ENCODE measurements at regions of chr10 and their contacts with region 1.

Region 1: GRCh38 chr10:24952707-24953645 is 570 bp upstream of the PRTFDC1 start:
- DNase-seq: peak; percentile 31
- H3K4me3 ChIP-seq: peak overlapping the region; percentile 38 to 47 (median 44)
- H3K27ac ChIP-seq: peak overlapping the region; percentile 64
- H3K4me1 ChIP-seq: peaks cover 9% of the 10 kb centered on the region
- H3K27me3 ChIP-seq: no peaks in the 10 kb centered on the region
- CTCF ChIP-seq: peak in 1 of 2 donors; percentile 21
- POLR2A ChIP-seq: peak; percentile 18

Region 2: GRCh38 chr10:24858288-24859270 is 94.4 kb before region 1 on chr10:
- CTCF ChIA-PET with region 1: no interaction called
- POLR2A ChIA-PET with region 1: no interaction called
- dilution Hi-C with region 1: no loop called
- intact Hi-C with region 1: loop called (anchors 1 kb)
- DNase-seq: peak; percentile 69
- H3K4me3 ChIP-seq: no peak overlapping the region
- H3K27ac ChIP-seq: peak overlapping the region; percentile 83
- H3K4me1 ChIP-seq: peaks cover 18% of the 10 kb centered on the region
- H3K27me3 ChIP-seq: no peaks in the 10 kb centered on the region
- CTCF ChIP-seq: no peak
- POLR2A ChIP-seq: no peak

Region 3: DNA sequence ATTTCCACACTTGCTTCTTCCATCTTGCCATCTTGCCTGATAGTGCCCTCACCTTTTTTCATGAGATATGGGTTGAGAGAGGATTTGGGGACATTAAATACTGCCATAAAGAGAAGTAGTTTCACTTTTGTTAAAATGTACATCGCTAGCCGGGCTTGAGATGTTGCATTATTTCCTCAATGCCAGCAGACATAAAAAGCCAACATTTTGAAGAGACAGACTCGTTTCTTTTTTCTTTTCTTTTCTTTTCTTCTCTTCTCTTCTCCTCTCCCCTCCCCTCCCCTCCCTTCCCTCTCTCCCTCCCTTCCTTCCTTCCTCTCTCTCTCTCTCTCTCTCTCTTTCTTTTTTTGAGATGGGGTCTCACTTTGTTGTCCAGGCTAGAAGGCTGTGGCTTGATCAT is 45.1 kb after region 1 on chr10:
- CTCF ChIA-PET with region 1: no interaction called
- POLR2A ChIA-PET with region 1: no interaction called
- dilution Hi-C with region 1: no loop called
- intact Hi-C with region 1: no loop called
- DNase-seq: no peak
- H3K4me3 ChIP-seq: no peak overlapping the region
- H3K27ac ChIP-seq: no peak overlapping the region
- H3K4me1 ChIP-seq: no peaks in the 10 kb centered on the region
- H3K27me3 ChIP-seq: no peaks in the 10 kb centered on the region
- CTCF ChIP-seq: no peak
- POLR2A ChIP-seq: no peak

Measured in endothelial cell of umbilical vein (primary cell).